ENCODE measurements at regions of chr7 and their contacts with region 1.

Region 1: GRCh38 chr7:26686448-26686981 is 177.9 kb downstream of the SKAP2 start:
- DNase-seq: no peak
- ATAC-seq: peak; percentile 33
- H3K4me3 Mint-ChIP-seq: no peak overlapping the region
- H3K27ac Mint-ChIP-seq: no peak overlapping the region
- H3K4me1 Mint-ChIP-seq: peaks cover 2% of the 10 kb centered on the region
- H3K27me3 Mint-ChIP-seq: peaks cover 25% of the 10 kb centered on the region

Region 2: DNA sequence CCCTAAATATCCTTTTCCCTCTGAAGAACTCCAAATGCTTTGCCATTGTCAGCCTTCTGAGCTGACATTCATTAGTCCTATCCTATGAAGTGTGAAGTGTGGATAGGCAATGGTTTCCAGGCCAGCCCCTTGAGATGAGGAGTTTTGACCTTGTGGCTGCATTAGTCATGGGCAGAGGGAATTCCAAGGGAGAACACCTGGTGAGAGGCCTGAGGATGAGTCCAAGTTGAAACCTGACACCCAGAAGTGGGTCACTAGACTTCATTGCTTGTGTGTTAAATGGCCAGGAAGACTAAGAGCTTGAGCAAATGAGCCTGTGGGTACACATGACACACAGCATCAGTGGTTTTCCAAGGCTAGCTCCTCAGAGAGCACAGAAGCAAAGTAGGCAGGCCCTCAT is 82.9 kb before region 1 on chr7:
- CTCF ChIA-PET with region 1: no interaction called
- POLR2A ChIA-PET with region 1: no interaction called
- DNase-seq: no peak
- ATAC-seq: no peak
- H3K4me3 Mint-ChIP-seq: no peak overlapping the region
- H3K27ac Mint-ChIP-seq: no peak overlapping the region
- H3K4me1 Mint-ChIP-seq: no peaks in the 10 kb centered on the region
- H3K27me3 Mint-ChIP-seq: peaks cover 30% of the 10 kb centered on the region

Region 3: GRCh38 chr7:26667500-26668133 is 18.9 kb before region 1 on chr7:
- CTCF ChIA-PET with region 1: interaction called, 15 read pairs
- POLR2A ChIA-PET with region 1: no interaction called
- DNase-seq: peak; percentile 76
- ATAC-seq: peak; percentile 71
- H3K4me3 Mint-ChIP-seq: no peak overlapping the region
- H3K27ac Mint-ChIP-seq: no peak overlapping the region
- H3K4me1 Mint-ChIP-seq: peaks cover 12% of the 10 kb centered on the region
- H3K27me3 Mint-ChIP-seq: peaks cover 22% of the 10 kb centered on the region

Region 4: DNA sequence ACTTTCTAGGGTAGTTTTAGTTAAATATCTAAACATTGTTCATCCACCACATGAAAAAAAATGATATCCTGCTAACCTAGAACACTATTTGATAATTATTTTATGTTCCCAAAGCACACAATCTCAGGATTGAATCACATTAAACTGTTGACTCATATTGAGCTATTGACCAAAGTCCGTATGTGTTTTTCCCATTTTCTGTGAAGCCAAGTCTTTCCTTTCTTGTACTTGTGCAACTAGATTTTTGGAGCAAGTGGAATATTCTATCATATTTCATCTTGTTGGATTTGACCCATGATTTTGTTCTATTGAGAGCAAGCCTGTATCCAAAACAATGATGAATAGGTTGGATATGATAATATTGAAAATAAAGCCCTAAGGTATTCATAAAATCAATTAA is 13.3 kb after region 1 on chr7:
- CTCF ChIA-PET with region 1: interaction called, 19 read pairs
- POLR2A ChIA-PET with region 1: no interaction called
- DNase-seq: no peak
- ATAC-seq: no peak
- H3K4me3 Mint-ChIP-seq: no peak overlapping the region
- H3K27ac Mint-ChIP-seq: no peak overlapping the region
- H3K4me1 Mint-ChIP-seq: no peaks in the 10 kb centered on the region
- H3K27me3 Mint-ChIP-seq: peaks cover 16% of the 10 kb centered on the region

Region 5: GRCh38 chr7:27160546-27161213 is 474.2 kb after region 1 on chr7:
- CTCF ChIA-PET with region 1: interaction called, 85 read pairs
- POLR2A ChIA-PET with region 1: no interaction called
- DNase-seq: peak; percentile 85
- ATAC-seq: peak; percentile 74
- H3K4me3 Mint-ChIP-seq: peak overlapping the region; percentile 65
- H3K27ac Mint-ChIP-seq: no peak overlapping the region
- H3K4me1 Mint-ChIP-seq: peaks cover 17% of the 10 kb centered on the region
- H3K27me3 Mint-ChIP-seq: peaks cover 77% of the 10 kb centered on the region

Measured in activated CD8-positive, alpha-beta T cell treated with anti-CD3 and anti-CD28 coated beads, Interleukin-2, amount 10 ng/mL, durations not matched to agents 7 days and 5 days (primary cell).